ENCODE measurements at regions of chr10 and their contacts with region 1.

Region 1: GRCh38 chr10:92573798-92574547 is at the start of gene IDE:
- DNase-seq: peak; percentile 84 to 97 (median 91)
- ATAC-seq: peak; percentile 90 to 95 (median 92)
- H3K4me3 ChIP-seq: peak within 1 kb of the TSS; percentile 75 to 98 (median 84)
- H3K27ac ChIP-seq: peak within 1 kb of the TSS; percentile 87 to 94 (median 93)
- H3K4me1 ChIP-seq: peaks cover 0 to 16% (median 13%) of the 10 kb centered on the region in 3 donors
- H3K27me3 ChIP-seq: no peaks in the 10 kb centered on the region
- CTCF ChIP-seq: peak; percentile 54 to 72 (median 64)
- total RNA-seq, gene IDE: 16.8 to 30.3 (median 23.6) TPM

Region 2: GRCh38 chr10:91424016-91424415 is 1150.0 kb before region 1 on chr10:
- intact Hi-C with region 1: no loop called
- DNase-seq: no peak
- ATAC-seq: no peak
- H3K4me3 ChIP-seq: no peak overlapping the region
- H3K27ac ChIP-seq: no peak overlapping the region
- H3K4me1 ChIP-seq: no peaks in the 10 kb centered on the region
- H3K27me3 ChIP-seq: no peaks in the 10 kb centered on the region
- CTCF ChIP-seq: no peak

Region 3: GRCh38 chr10:92517034-92517655 is 56.8 kb before region 1 on chr10:
- intact Hi-C with region 1: loop called in 2 of 3 experiments (anchors 5 to 10 kb)
- DNase-seq: peak in 4 of 6 donors; percentile 23 to 58 (median 48)
- ATAC-seq: peak; percentile 87 to 97 (median 96)
- H3K4me3 ChIP-seq: no peak overlapping the region
- H3K27ac ChIP-seq: no peak overlapping the region
- H3K4me1 ChIP-seq: no peaks in the 10 kb centered on the region
- H3K27me3 ChIP-seq: no peaks in the 10 kb centered on the region
- CTCF ChIP-seq: peak; percentile 44 to 77 (median 68)

Measured in pancreas (tissue), 10 donors.